Heart left ventricle (tissue), 16 donors: ENCODE measurements at regions of chr6 and their contacts with region 1.

Region 1: DNA sequence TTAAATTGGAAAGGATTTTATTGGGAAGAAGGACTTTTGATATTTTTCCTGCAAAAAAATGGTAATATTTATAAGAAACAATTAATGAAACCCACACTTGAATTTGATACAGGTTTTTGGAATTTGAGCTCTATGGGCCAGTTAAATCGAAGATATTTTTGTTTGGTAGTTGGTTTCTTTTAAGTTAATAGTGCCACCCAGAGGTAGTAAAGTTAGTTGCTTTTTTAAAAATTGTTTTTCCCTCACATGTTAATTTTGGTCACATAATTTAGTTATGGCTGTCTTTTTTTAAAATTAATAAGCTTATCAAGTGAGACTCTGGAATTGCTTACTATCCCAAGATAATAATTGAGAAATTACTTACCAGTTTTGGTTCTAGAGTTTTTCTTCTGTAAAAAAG is 7.1 kb downstream of the PRIM2 start:
- DNase-seq: no peak
- ATAC-seq: no peak
- H3K4me3 ChIP-seq: no peak overlapping the region
- H3K27ac ChIP-seq: no peak overlapping the region
- H3K4me1 ChIP-seq: no peaks in the 10 kb centered on the region
- H3K27me3 ChIP-seq: no peaks in the 10 kb centered on the region
- CTCF ChIP-seq: peak; percentile 8 to 58 (median 44)
- POLR2A ChIP-seq: no peak

Region 2: DNA sequence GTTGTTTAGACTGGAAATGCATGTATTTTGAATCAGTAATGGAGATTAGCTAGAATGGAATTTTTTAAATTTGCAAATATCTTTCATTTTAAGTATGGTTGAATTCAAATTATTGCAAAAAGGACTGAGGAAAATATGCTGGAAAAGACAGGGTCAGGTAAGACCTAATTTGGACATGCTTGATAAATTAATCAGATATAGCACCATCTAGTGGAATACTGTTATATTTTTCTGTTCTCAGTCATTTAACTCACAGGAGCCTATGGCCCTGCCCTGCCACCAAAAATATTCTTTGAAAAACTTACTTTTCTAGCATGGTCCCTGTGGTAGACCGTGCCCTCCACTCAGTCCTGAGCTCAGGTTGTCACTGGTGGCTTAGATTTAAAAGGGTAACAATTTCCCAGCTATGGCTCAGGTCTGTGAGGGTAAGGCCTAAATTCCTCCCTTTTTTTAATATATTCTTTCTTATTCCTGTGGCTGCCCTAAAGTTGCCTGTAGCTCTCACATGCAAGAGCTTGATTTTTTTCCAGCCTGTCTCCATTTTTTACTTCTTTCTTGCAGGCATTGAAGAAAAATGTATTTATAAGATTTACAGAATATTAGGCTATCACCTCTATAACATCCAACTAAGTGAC is 303.3 kb before region 1 on chr6:
- intact Hi-C with region 1: loop called in 3 of 10 experiments (anchors 5 to 10 kb)
- DNase-seq: no peak
- ATAC-seq: peak in 1 of 4 donors; percentile 31
- H3K4me3 ChIP-seq: no peak overlapping the region
- H3K27ac ChIP-seq: no peak overlapping the region
- H3K4me1 ChIP-seq: no peaks in the 10 kb centered on the region
- H3K27me3 ChIP-seq: no peaks in the 10 kb centered on the region
- CTCF ChIP-seq: peak; percentile 35 to 70 (median 54)
- POLR2A ChIP-seq: no peak

Region 3: DNA sequence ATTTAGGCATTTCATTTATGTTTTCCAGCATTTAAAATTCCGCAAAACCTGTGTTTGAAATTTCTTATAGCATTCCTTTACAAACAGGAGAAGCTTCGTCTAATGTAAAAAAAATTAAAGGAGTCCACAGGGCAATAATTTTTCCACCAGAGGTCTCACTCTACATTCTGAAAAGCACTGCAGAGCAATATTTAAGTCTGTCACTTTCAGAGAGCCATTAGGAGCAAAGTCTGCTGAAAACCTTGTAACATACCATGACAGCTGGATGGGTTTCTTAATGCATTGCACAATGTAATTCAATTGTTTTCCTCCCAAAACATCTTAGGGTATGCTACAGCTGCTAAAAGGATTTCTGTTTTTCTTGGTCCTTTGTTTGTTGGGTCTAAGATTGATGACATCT is 134.4 kb before region 1 on chr6:
- intact Hi-C with region 1: loop called in 3 of 10 experiments (anchors 5 to 10 kb)
- DNase-seq: no peak
- ATAC-seq: no peak
- H3K4me3 ChIP-seq: no peak overlapping the region
- H3K27ac ChIP-seq: no peak overlapping the region
- H3K4me1 ChIP-seq: peaks cover 0 to 6% (median 0%) of the 10 kb centered on the region in 12 donors
- H3K27me3 ChIP-seq: no peaks in the 10 kb centered on the region
- CTCF ChIP-seq: peak in 7 of 12 donors; percentile 21 to 54 (median 37)
- POLR2A ChIP-seq: no peak